PC-9 (cell line): ENCODE measurements at regions of chr7 and their contacts with region 1.

Region 1: GRCh38 chr7:100101016-100101862 is at the starts of genes AP4M1 and MCM7:
- DNase-seq: peak; percentile 96 to 100
- H3K4me3 ChIP-seq: peak within 1 kb of the TSS; percentile 99
- H3K27ac ChIP-seq: peak within 1 kb of the TSS; percentile 85
- H3K4me1 ChIP-seq: peaks cover 19% of the 10 kb centered on the region
- H3K27me3 ChIP-seq: no peaks in the 10 kb centered on the region
- CTCF ChIP-seq: no peak
- total RNA-seq, gene AP4M1: 18.1 and 26.2 TPM in 2 replicates
- total RNA-seq, gene MCM7: 195 and 238 TPM in 2 replicates

Region 2: DNA sequence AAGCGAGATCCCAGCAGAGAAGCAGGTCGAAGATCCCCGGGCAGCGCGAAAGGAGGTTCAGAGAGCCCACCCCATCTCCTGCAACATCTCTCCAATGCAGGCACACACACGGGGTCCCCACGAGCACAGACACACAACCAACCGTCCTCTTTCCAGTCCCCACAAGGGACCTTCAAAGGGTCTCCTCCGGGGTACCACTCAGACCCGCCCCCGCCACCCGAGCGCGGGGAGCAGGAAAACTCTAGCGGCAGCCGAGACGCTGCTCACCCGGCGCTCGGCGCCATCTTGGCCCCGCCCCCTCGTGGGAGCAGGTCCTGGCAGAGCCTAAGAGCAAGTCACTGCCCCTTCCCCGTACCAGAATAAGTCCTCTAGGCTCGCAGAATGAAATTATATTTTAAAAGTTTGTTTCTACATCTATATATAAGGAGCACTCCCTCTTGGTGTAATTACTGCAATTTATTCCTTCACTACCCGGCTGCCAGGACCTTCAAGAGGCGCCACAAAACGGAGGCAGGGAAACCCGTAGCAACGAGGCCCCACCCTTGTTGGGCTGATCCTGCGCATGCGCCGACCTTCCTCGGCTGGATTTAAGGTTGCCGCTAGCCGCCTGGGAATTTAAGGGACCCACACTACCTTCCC is 17.9 kb after region 1 on chr7 and contains the starts of genes CNPY4 and TAF6:
- CTCF ChIA-PET with region 1: no interaction called
- POLR2A ChIA-PET with region 1: interaction called, 8 read pairs
- intact Hi-C with region 1: loop called (anchors 1 kb)
- DNase-seq: peak; percentile 86 to 96
- H3K4me3 ChIP-seq: peak within 1 kb of the TSS; percentile 76
- H3K27ac ChIP-seq: peak within 1 kb of the TSS; percentile 52
- H3K4me1 ChIP-seq: peaks cover 5% of the 10 kb centered on the region; the same call in 1 of the 2 replicates
- H3K27me3 ChIP-seq: no peaks in the 10 kb centered on the region
- CTCF ChIP-seq: no peak
- total RNA-seq, gene CNPY4: 10.3 and 10.5 TPM in 2 replicates
- total RNA-seq, gene TAF6: 91.4 and 108 TPM in 2 replicates